AG04449 (cell line): ENCODE measurements at regions of chr15 and their contacts with region 1.

Region 1: DNA sequence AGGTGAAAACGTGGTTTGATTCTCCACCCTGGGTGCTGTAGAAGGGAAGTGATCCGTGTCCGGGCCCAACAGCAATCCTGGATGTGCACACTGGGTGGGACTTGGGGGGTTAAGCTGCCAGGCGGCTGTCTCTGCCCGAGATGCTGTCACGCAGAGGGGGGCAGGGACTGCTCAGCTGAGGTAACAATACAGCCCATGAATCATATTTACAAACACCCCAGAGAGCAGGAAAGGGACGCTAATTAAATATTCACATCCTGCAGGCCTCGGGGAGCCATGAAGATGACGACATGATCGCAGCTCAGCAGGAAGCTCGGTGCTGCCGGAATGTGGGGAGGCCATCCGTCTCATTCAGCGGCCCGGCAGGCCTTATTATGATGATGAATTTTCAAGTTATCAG is 17.9 kb upstream of the CRABP1 start:
- DNase-seq: no peak
- H3K4me3 ChIP-seq: no peak overlapping the region
- CTCF ChIP-seq: no peak

Region 2: GRCh38 chr15:78264304-78265136 is 57.7 kb before region 1 on chr15 and contains the start of gene DNAJA4:
- CTCF ChIA-PET with region 1: no interaction called
- POLR2A ChIA-PET with region 1: no interaction called
- DNase-seq: no peak
- H3K4me3 ChIP-seq: peak within 1 kb of the TSS; percentile 43
- CTCF ChIP-seq: no peak

Region 3: GRCh38 chr15:78415286-78415685 is 93.0 kb after region 1 on chr15:
- CTCF ChIA-PET with region 1: interaction called, 714 read pairs
- POLR2A ChIA-PET with region 1: no interaction called
- DNase-seq: no peak
- H3K4me3 ChIP-seq: no peak overlapping the region
- CTCF ChIP-seq: peak; percentile 39